ENCODE measurements at regions of chr1 and their contacts with region 1.

Region 1: DNA sequence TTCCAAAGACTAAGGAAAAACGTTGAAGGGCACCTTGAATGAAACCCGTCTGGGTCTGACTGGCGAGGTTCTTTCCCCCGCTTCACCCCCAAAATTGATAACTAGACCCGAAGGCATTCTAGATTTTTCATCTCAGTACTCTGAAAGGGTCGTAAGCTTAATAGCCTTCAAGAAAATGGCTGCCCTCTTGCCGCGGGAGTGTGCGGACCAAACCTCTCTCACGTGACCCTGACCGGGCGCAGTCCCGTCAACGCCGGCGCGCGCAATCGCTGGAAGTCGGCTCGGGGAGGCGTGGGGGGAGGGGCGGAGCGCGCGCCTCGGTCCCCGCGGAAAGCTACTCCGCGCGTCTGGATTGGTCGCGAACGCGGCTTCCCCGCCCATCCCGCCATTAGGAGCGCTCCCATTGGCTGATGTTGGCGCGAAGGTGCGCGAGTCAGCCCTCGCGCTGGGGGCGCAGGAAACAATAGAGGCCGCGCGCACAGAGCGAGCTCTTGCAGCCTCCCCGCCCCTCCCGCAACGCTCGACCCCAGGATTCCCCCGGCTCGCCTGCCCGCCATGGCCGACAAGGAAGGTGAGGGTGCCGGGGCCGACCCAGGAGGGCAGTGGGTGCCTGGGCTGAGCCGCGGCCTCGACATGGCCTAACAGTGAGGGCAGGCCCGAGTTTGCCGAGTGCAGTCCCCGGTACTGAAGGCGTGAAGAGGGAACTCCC is at the start of gene RBBP4:
- DNase-seq: peak; percentile 85 to 98
- H3K4me3 ChIP-seq: peak within 1 kb of the TSS; percentile 81
- H3K27ac ChIP-seq: peak within 1 kb of the TSS; percentile 96
- H3K4me1 ChIP-seq: peaks cover 33% of the 10 kb centered on the region
- H3K27me3 ChIP-seq: no peaks in the 10 kb centered on the region
- CTCF ChIP-seq: no peak
- total RNA-seq, gene RBBP4: 185 and 206 TPM in 2 replicates

Region 2: DNA sequence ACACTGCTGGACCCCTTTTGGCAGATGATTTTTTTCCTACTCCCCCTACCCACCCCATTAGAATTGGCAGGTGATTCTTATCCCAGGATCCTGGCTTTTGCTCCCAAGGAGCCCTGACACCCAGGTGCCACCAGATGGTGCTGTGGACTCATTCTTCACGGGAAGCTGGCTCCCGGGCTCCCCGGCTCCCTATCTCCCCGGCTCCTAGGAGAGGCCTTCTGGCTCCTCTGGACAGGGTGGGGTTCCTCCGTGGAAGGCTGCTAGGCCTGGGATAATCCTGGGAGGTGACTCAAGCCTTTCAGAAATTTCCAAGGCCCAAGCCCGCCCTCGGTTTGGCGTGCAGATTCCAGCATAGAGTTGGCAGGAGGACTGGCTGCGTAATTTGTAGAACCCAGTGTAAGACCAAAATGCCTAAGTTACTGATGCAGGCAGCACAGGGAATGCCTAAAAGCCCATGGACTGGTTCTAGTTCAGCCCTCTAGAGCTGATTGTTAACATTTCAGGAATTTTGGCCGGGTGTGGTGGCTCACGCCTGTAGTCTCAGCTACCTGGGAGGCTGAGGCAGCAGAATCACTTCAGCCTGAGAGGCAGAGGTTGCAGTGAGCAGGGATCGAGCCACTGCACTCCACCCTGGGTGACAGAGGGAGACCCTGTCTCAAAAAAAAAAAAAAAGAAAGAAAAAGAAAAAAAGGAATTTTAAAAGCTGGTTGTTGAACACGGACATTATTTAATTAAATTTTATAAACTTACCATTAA is 249.9 kb before region 1 on chr1:
- CTCF ChIA-PET with region 1: interaction called, 4 read pairs
- POLR2A ChIA-PET with region 1: no interaction called
- intact Hi-C with region 1: loop called (anchors 5 kb)
- DNase-seq: peak; percentile 62 to 77
- H3K4me3 ChIP-seq: no peak overlapping the region
- H3K27ac ChIP-seq: no peak overlapping the region
- H3K4me1 ChIP-seq: peaks cover 4% of the 10 kb centered on the region
- H3K27me3 ChIP-seq: no peaks in the 10 kb centered on the region
- CTCF ChIP-seq: peak; percentile 95

Region 3: DNA sequence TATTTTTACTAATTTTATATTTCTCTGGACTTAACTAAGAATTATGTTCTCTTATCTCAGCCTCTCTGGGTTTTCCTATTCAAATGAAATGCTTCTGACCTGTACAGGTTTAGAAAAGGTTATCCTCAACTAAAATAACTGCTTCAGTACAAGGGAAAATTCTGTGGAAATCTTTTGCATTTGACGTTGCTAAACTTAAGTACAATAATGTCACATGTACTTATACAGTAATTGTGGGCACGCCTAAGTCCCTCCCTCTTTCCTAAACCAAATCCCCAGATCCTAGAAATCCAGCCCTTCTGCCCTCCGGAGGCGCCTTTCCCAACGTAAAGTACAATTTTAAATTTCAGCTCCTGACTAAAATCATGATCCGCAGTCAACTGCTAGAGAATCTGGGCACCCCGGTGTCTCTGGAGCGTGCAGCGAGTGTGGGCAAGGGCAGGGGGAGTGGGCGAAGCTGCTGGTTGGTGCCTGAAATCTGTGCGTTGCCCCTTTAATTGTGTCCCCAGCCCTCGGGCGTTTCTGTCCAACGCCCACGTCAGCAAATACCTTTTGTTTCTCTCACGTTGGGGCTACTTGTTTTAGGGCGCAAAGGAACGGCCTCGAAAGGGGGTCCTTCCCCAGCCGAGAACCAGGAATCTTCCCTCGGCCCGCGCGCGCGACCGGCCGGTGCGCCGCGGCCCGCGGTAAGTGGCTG is 111.9 kb before region 1 on chr1 and contains the start of gene ZBTB8A:
- CTCF ChIA-PET with region 1: no interaction called
- POLR2A ChIA-PET with region 1: no interaction called
- intact Hi-C with region 1: loop called (anchors 5 kb)
- DNase-seq: peak; percentile 48 to 56
- H3K4me3 ChIP-seq: peak within 1 kb of the TSS; percentile 68
- H3K27ac ChIP-seq: no peak within 1 kb of the TSS
- H3K4me1 ChIP-seq: peaks cover 10% of the 10 kb centered on the region; the same call in 1 of the 2 replicates
- H3K27me3 ChIP-seq: no peaks in the 10 kb centered on the region
- CTCF ChIP-seq: no peak
- total RNA-seq, gene ZBTB8A: 4.2 and 4.3 TPM in 2 replicates

Region 4: GRCh38 chr1:32798679-32799416 is 147.9 kb after region 1 on chr1:
- CTCF ChIA-PET with region 1: no interaction called
- POLR2A ChIA-PET with region 1: no interaction called
- intact Hi-C with region 1: loop called (anchors 5 kb)
- DNase-seq: no peak
- H3K4me3 ChIP-seq: 0 out of 2 replicates have a peak overlapping the region, but pooled peaks have one; percentile 17
- H3K27ac ChIP-seq: peak overlapping the region; percentile 85
- H3K4me1 ChIP-seq: peaks cover 65% of the 10 kb centered on the region
- H3K27me3 ChIP-seq: no peaks in the 10 kb centered on the region
- CTCF ChIP-seq: no peak

Measured in PC-9 (cell line).